Activated naive CD4-positive, alpha-beta T cell treated with anti-CD3 and anti-CD28 coated beads for 36 hours (primary cell): ENCODE measurements at regions of chr2 and their contacts with region 1.

Region 1: DNA sequence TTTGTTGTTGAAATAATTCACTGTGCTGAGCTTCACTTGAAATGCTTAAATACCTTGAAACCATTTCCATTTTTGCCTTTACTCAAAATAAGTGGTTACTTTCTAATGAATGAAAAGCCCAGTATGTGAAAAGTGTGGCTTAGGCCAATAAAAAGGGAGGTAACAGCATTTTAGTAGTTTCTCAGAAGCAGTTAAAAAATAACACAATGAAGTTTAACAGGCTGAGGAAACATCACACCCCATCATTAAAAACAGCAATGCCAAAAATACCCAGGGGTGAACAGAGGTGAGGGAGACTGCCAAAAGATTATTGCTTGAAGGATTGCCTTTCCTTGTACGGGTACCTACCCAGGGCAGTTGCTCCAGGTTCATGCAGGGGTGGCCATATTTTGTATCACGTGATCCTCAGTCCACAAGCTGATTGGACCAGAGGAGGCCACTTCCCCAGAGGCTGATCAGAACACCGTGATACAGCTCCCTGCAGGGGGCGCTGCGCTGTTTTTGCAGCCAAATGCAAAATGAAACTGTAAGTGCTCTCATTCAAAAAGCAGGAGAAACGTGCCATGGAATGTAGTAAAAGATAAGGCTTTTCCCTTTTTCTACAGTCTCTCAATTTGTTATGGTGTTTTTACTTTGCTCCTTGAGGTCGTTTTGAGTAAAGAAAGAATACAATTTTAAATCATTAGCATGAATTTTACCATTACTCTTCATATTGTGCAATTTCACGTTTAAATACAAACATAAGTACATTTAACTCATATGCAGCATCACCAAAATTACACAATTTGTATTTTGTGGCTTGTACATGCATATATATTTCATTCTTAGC is 70.2 kb upstream of the SH3BP4 start:
- DNase-seq: peak; percentile 70
- H3K4me3 Mint-ChIP-seq: no peak overlapping the region
- H3K27ac Mint-ChIP-seq: no peak overlapping the region
- H3K4me1 Mint-ChIP-seq: no peaks in the 10 kb centered on the region
- H3K27me3 Mint-ChIP-seq: peaks cover 9% of the 10 kb centered on the region

Region 2: GRCh38 chr2:235106874-235107639 is 225.4 kb after region 1 on chr2:
- CTCF ChIA-PET with region 1: no interaction called
- intact Hi-C with region 1: loop called (anchors 5 kb)
- DNase-seq: peak; percentile 49
- H3K4me3 Mint-ChIP-seq: no peak overlapping the region
- H3K27ac Mint-ChIP-seq: no peak overlapping the region
- H3K4me1 Mint-ChIP-seq: no peaks in the 10 kb centered on the region
- H3K27me3 Mint-ChIP-seq: peaks cover 7% of the 10 kb centered on the region